Psoas muscle (tissue), 8 donors: ENCODE measurements at regions of chr11 and their contacts with region 1.

Region 1: GRCh38 chr11:46616998-46617675 is at the starts of genes ATG13 and HARBI1:
- DNase-seq: peak; percentile 89 to 94
- ATAC-seq: peak; percentile 97 to 98 (median 98)
- H3K4me3 ChIP-seq: peak within 1 kb of the TSS; percentile 83
- H3K27ac ChIP-seq: peak within 1 kb of the TSS; percentile 97
- H3K4me1 ChIP-seq: peaks cover 23% of the 10 kb centered on the region
- H3K27me3 ChIP-seq: no peaks in the 10 kb centered on the region
- CTCF ChIP-seq: no peak
- total RNA-seq, gene ATG13: 27.0 to 50.7 (median 35.8) TPM
- total RNA-seq, gene HARBI1: 2.0 to 4.4 (median 2.8) TPM

Region 2: DNA sequence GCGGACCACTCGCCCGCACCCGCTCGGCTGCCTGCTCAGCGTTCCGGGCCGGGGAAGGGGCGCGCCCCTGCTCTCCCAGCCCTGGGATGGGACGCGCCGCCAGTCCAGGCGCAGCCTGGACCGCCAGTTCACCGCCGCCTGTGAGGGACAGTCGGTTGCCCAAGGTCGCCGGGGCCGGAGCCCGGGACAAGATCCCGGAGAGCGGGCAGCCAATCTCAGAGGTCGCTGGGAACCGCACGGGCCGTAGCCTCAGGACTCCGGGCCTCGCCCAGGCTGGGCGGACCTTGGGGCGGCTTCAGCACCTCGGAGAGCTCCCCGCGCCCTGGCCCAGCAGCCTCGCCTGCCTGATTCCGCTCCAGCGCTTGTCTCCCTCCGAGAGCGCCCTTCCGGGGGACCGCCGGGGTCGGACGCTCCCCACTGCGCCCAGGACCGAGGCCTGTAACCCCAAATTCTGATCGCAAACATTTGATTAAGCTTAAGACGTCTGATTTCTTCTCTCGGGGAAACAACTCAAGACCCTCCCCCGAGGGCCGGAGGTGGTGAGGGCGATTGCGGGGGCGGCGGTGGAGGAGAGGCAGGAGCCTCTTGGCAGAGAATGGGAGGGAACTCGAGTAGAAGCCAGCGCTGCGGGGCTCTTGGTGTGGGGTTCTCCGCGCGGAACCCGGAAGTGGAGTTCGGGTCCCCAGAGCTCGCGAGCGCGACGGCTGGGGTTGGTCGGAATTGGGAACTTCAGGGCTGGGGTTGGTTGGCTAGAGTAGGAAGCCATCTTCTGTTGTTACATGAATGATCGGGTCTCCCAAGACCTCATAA is 224.5 kb before region 1 on chr11:
- intact Hi-C with region 1: loop called (anchors 5 to 10 kb)
- DNase-seq: peak; percentile 89 to 93
- ATAC-seq: peak; percentile 88 to 93 (median 92)
- H3K4me3 ChIP-seq: peak overlapping the region; percentile 56
- H3K27ac ChIP-seq: no peak overlapping the region
- H3K4me1 ChIP-seq: peaks cover 21% of the 10 kb centered on the region
- H3K27me3 ChIP-seq: peaks cover 0 to 43% (median 14%) of the 10 kb centered on the region in 3 donors
- CTCF ChIP-seq: no peak

Region 3: GRCh38 chr11:46537537-46538295 is 79.4 kb before region 1 on chr11:
- intact Hi-C with region 1: loop called in 1 of 2 experiments (anchors 2 kb)
- DNase-seq: peak; percentile 53 to 71
- ATAC-seq: peak; percentile 75 to 83 (median 82)
- H3K4me3 ChIP-seq: no peak overlapping the region
- H3K27ac ChIP-seq: no peak overlapping the region
- H3K4me1 ChIP-seq: peaks cover 37% of the 10 kb centered on the region
- H3K27me3 ChIP-seq: no peaks in the 10 kb centered on the region
- CTCF ChIP-seq: peak; percentile 88

Region 4: DNA sequence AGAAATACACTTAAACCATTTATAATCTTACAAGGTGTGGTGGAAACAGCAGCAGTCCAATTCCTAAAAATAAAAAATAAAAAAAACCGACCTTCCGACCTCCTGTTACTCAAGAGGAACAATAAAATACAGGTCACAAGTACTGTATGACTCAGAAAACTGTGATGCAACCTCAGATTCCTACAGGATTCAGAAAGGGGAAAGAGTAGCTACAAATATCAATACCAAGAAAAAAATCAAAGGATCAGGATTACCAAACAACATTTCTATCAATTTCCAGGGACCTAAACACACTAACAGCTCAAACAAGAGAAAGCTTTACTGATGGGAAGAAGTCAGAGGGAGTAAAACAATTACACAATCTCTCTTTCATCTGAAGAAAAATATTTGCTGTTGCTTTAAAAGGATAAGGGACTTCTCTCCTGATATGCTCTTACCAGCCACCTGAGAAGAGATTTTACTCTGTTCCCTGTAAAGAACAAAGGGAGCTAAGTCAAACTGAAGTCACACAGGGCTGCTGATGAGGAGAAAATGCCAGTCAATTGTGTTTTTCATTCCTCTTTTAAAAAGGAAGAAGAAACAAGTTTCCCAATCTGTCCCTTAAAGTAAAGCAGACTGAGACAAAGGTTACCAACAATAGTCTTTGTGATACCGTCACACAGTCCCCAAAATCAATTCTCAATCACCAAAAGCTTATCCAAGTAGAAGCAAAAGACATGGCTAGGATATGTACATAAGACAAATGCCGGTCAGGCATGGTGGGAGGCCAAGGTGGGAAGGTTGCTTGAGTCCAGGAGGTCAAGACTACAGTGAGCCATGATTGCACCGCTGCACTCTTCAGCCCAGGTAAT is 62.7 kb before region 1 on chr11:
- intact Hi-C with region 1: loop called in 1 of 2 experiments (anchors 5 kb)
- DNase-seq: no peak
- ATAC-seq: peak; percentile 80 to 93 (median 86)
- H3K4me3 ChIP-seq: peak overlapping the region; percentile 3
- H3K27ac ChIP-seq: peak overlapping the region; percentile 83
- H3K4me1 ChIP-seq: peaks cover 35% of the 10 kb centered on the region
- H3K27me3 ChIP-seq: no peaks in the 10 kb centered on the region
- CTCF ChIP-seq: no peak

Region 5: DNA sequence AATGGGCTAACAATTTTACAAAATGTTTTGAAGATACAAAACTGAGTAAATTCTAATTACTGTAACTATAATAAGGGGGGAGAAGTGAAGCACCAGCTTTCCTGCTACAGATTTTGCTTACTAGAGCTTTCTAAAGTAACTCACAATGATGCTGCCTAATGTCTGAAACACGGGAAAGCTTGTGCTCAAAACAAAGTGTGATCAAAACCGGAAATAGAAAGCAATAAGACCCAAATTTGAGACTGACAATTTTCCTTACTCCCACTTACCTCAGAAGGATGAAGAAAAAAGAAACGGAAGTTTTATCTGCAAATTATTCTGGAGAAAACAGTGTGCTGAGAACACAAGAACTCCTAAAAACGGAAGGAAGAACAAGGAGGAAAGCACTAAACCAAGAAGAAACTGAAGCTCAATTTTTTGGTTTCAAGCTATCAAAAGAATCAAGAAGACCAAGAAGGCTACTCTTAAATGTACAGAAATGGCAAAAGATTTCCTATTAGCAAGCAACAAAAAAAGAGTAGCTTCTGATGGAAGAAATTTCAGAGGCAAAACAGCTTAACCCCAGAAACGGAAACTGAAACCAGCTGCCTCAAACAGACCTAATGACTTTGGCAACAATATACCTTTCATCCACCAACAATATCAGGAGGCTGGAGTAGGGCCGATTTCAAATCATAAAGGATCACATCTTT is 56.7 kb before region 1 on chr11:
- intact Hi-C with region 1: loop called in 1 of 2 experiments (anchors 5 kb)
- DNase-seq: no peak
- ATAC-seq: peak in 3 of 4 donors; percentile 49 to 64 (median 49)
- H3K4me3 ChIP-seq: peak overlapping the region; percentile 53
- H3K27ac ChIP-seq: peak overlapping the region; percentile 66
- H3K4me1 ChIP-seq: peaks cover 38% of the 10 kb centered on the region
- H3K27me3 ChIP-seq: no peaks in the 10 kb centered on the region
- CTCF ChIP-seq: no peak